CD4-positive, alpha-beta T cell (primary cell): ENCODE measurements at regions of chr9 and their contacts with region 1.

Region 1: GRCh38 chr9:69229367-69229766 is 55.3 kb downstream of the TJP2 start:
- DNase-seq: no peak
- ATAC-seq: no peak
- H3K4me3 ChIP-seq: no peak overlapping the region
- H3K4me3 Mint-ChIP-seq: no peak overlapping the region
- H3K27ac ChIP-seq: no peak overlapping the region
- H3K27ac Mint-ChIP-seq: no peak overlapping the region
- H3K4me1 ChIP-seq: no peaks in the 10 kb centered on the region
- H3K4me1 Mint-ChIP-seq: no peaks in the 10 kb centered on the region
- H3K27me3 ChIP-seq: no peaks in the 10 kb centered on the region
- H3K27me3 Mint-ChIP-seq: no peaks in the 10 kb centered on the region
- CTCF ChIP-seq: no peak

Region 2: DNA sequence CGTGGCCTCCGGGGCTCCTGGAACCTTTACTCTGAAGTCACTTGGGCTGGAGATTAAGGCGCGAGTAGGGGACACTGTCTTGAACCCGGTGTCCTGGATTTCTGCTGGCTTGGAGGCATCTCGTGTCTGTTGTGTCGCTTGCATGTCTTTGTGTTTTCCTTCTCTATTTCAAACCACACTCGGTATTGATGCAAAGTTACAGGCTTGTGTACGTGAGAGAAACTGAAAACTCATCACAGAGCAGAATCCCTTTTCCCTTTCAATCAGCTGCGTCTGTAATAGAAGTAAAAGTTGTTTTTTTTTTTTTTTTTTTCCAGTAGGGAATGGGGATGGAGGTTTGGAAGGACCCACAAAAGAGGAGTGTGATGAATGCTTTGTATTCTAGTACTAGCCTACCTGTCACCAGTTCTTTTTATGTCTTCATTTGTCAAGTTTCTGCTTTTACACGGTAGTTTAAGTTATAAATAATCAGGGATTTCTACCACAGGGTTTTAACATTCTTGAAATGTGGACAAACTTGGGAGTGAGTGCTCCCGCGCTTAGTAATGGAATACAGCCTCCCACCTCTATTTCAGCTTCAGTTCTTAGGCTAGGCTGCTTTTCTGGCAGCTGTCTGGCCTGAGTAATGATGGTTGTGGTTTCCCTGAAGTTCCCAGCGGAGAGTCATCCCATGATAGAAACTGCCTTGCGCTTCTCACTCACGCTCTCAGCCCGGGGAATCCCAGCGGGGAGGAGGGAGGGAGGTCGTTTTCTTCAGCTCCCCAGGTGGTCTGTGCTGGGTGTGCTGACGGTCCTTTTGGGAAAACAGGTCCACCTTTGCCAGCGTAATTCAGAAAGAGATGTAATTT is 54.5 kb before region 1 on chr9:
- CTCF ChIA-PET with region 1: no interaction called
- POLR2A ChIA-PET with region 1: no interaction called
- intact Hi-C with region 1: loop called in 1 of 2 experiments (anchors 5 kb)
- DNase-seq: peak in 3 of 14 experiments; percentile 14 to 76 (median 69)
- ATAC-seq: no peak
- H3K4me3 ChIP-seq: peak overlapping the region; percentile 69
- H3K4me3 Mint-ChIP-seq: peak overlapping the region; percentile 88
- H3K27ac ChIP-seq: no peak overlapping the region
- H3K27ac Mint-ChIP-seq: no peak overlapping the region
- H3K4me1 ChIP-seq: peaks cover 18% of the 10 kb centered on the region
- H3K4me1 Mint-ChIP-seq: peaks cover 45% of the 10 kb centered on the region
- H3K27me3 ChIP-seq: peaks cover 3 to 26% of the 10 kb centered on the region in 2 experiments
- H3K27me3 Mint-ChIP-seq: peaks cover 46% of the 10 kb centered on the region
- CTCF ChIP-seq: no peak